Posterior vena cava (tissue), 2 donors: ENCODE measurements at regions of chr4 and their contacts with region 1.

Region 1: DNA sequence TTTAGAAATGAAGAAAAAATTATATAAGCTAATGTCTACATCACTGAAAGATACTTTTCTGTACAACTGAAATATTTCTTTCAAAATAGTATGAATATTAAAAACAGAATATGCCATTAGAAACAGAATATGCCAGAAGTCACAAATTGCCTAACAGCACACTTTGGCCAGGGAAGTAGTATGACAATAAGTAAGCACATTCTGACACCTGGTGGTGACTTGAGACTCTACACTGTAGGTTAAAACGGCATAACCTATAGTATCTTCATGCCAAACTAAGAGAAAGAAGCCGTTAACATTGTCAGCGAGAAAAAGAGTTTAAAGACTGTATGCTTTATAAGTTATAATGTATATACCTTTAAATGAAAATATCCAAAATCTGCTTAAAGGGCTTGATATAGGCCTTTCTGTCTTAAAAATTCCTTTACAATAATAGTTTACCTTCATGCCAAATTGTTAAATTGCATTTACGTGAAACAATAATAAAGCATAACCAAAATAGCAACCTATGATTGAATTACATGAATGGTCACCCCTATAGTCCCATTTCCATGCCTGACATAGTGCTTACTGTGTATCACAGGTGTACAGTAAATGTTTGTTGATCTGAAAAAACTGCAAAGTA is 32.8 kb downstream of the FAM13A start:
- DNase-seq: no peak

Region 2: DNA sequence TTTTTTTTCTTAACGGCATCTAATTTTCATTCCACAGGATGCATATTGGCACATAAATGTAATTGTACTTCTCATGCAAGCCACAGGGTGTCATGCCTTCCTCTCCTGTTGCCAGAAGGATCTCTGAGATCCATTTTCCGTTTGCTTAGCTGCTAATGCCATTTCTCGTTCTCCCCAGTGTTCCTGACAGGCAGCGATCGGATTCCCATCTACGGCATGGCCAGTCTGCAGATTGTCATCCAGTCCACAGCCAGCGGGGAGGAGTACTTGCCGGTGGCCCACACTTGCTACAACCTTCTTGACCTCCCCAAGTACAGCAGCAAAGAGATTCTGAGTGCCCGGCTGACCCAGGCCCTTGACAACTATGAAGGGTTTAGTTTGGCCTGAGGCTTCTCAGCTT is 317.6 kb before region 1 on chr4:
- intact Hi-C with region 1: loop called in 1 of 2 experiments (anchors 10 kb)
- DNase-seq: no peak

Region 3: GRCh38 chr4:88818631-88819470 is 205.3 kb before region 1 on chr4:
- intact Hi-C with region 1: loop called in 1 of 2 experiments (anchors 5 kb)
- DNase-seq: no peak

Region 4: GRCh38 chr4:89039730-89040338 is 15.7 kb after region 1 on chr4:
- intact Hi-C with region 1: no loop called
- DNase-seq: no peak